CD4-positive, alpha-beta T cell (primary cell): ENCODE measurements at regions of chr1 and their contacts with region 1.

Region 1: DNA sequence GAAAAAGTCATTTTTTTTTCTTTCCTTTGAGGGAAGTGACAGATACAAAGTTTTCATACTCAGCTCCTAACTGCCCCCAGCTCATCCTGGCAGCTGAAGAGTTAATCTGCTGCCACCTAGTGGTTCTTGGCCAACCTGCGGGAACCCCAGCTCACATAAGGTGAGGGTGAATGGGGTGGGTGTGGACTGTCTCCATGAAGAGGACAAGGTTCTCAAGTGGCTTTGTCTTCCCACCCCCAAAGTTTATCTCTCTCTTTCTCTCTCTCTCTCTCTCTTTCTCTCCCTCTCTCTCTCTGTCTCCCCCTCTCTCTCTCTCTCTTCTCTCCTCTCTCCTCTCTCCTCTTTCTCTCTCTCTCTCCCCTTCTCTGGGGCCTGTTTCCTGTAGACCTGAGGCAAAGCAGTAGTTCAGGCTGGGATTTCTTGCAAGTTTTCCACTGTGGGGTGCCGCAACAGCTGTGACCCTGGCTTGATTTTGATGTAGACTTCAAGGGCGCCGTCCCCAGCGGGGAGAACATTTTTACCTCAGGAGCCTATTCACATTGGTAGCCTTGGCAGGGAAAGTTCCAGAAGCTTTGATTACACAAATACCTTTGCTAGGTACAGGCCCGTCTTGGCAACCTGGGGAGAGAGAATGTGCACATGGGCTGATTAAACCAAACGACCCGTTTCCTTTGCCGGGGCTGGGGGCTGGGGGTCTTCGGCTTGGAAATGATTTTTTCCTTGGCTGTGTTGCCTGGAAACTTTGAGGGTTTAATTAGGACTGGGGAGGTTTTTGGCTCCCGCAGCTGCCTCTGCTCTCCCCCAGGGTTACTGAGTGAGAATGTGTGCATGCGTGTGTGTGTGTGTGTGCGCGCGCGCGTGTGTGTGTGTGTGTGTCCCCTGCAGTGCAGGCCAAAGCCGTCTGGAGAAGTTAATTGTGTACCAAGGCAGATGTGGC is 135.9 kb downstream of the TM2D1 start:
- DNase-seq: peak; percentile 13 to 67 (median 35)
- ATAC-seq: peak; percentile 56
- H3K4me3 ChIP-seq: no peak overlapping the region
- H3K4me3 Mint-ChIP-seq: no peak overlapping the region
- H3K27ac ChIP-seq: no peak overlapping the region
- H3K27ac Mint-ChIP-seq: no peak overlapping the region
- H3K4me1 ChIP-seq: no peaks in the 10 kb centered on the region
- H3K4me1 Mint-ChIP-seq: no peaks in the 10 kb centered on the region
- H3K27me3 ChIP-seq: no peaks in the 10 kb centered on the region
- H3K27me3 Mint-ChIP-seq: no peaks in the 10 kb centered on the region
- CTCF ChIP-seq: peak; percentile 71

Region 2: GRCh38 chr1:59971464-59971911 is 1617.5 kb before region 1 on chr1:
- CTCF ChIA-PET with region 1: no interaction called
- POLR2A ChIA-PET with region 1: no interaction called
- intact Hi-C with region 1: loop called in 1 of 2 experiments (anchors 10 kb)
- DNase-seq: peak in 13 of 14 experiments; percentile 4 to 61 (median 30)
- ATAC-seq: no peak
- H3K4me3 ChIP-seq: no peak overlapping the region
- H3K4me3 Mint-ChIP-seq: no peak overlapping the region
- H3K27ac ChIP-seq: no peak overlapping the region
- H3K27ac Mint-ChIP-seq: no peak overlapping the region
- H3K4me1 ChIP-seq: peaks cover 5% of the 10 kb centered on the region
- H3K4me1 Mint-ChIP-seq: peaks cover 7% of the 10 kb centered on the region
- H3K27me3 ChIP-seq: peaks cover 7 to 14% of the 10 kb centered on the region in 2 experiments
- H3K27me3 Mint-ChIP-seq: peaks cover 30% of the 10 kb centered on the region
- CTCF ChIP-seq: peak; percentile 81

Region 3: DNA sequence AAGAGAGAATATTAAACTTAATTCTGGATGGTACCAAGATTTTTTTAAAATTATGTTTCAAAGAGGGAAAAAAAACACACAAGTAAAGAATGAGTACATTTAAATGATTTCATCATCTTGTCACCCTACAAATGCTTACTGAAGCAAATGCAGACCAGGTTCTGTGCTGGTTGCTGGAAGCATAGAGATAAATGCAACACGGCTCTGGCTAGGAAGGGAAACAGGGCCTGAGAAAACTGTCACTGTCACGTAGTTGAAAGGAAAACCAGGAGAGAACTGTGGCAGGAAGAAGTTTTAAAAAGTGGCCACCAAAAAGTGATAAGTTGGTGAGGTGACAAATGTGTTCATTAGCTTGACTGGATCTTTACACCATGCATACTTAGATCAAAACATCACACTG is 843.5 kb before region 1 on chr1:
- CTCF ChIA-PET with region 1: no interaction called
- POLR2A ChIA-PET with region 1: no interaction called
- intact Hi-C with region 1: no loop called
- DNase-seq: no peak
- ATAC-seq: no peak
- H3K4me3 ChIP-seq: no peak overlapping the region
- H3K4me3 Mint-ChIP-seq: no peak overlapping the region
- H3K27ac ChIP-seq: no peak overlapping the region
- H3K27ac Mint-ChIP-seq: no peak overlapping the region
- H3K4me1 ChIP-seq: no peaks in the 10 kb centered on the region
- H3K4me1 Mint-ChIP-seq: no peaks in the 10 kb centered on the region
- H3K27me3 ChIP-seq: no peaks in the 10 kb centered on the region
- H3K27me3 Mint-ChIP-seq: no peaks in the 10 kb centered on the region
- CTCF ChIP-seq: no peak

Region 4: DNA sequence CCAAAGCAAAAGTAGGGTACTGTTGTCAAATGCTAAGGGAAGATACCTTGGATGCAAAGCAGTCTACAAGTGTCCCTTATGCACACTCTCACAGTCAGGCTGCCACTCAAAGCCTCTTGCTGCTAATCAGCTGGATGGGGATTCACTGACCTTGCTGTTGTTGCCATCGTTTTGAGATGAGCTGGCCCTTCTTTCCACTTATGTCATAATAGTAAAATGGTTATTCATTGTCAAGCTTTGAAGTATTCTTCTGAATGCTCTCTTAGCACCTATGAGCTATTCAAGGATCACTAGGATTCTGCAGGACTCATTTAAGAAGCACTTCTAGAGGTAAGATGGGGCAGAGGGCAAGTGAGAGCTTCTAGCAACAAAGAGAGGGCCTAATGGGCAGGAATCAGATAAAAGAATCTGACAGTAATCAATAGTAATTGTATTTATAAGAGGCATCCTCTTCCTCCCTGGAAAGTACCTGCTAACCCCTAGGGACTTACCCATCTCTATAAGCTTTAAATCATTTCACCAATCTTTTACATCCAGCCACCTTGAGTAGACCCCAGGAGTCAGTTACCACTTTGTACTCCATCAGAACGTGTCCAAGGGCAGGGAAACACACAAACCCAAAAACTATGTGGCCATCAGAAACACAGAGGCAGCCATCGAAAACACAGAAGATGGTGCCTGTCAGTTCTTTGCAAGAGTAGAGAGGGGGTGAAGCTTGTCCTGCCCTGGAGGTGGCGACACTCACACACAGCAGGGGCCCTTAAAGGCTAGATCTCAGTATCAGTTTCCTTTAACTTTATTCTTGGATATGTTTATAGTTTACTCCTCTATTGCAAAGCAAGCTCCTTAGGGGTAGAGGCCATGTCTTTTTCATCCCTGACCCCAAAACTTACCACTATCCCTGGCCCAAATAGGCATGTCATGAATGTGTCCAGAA is 610.3 kb before region 1 on chr1:
- CTCF ChIA-PET with region 1: no interaction called
- POLR2A ChIA-PET with region 1: no interaction called
- intact Hi-C with region 1: loop called (anchors 2 to 10 kb)
- DNase-seq: peak in 12 of 14 experiments; percentile 1 to 58 (median 19)
- ATAC-seq: peak; percentile 61
- H3K4me3 ChIP-seq: no peak overlapping the region
- H3K4me3 Mint-ChIP-seq: no peak overlapping the region
- H3K27ac ChIP-seq: no peak overlapping the region
- H3K27ac Mint-ChIP-seq: no peak overlapping the region
- H3K4me1 ChIP-seq: no peaks in the 10 kb centered on the region
- H3K4me1 Mint-ChIP-seq: no peaks in the 10 kb centered on the region
- H3K27me3 ChIP-seq: no peaks in the 10 kb centered on the region
- H3K27me3 Mint-ChIP-seq: no peaks in the 10 kb centered on the region
- CTCF ChIP-seq: peak; percentile 15

Region 5: DNA sequence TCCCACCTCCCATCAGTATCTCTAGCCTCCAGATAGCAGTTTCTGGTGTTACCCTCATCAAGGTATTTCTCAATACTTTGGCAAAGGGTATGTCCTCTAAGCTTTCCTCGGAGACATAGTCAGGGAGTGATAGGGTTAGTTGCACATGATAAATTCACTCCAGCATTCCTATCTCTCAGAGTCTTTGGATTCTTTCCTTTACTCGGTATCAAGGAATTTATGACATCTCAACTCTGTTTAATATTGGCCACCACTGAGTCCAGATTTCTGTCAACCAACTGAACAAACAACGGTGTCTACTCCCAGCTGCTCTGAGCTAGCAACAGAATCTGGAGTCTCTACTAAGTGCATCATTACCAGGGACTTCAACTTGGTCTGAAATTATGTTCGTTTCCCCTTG is 97.5 kb before region 1 on chr1:
- CTCF ChIA-PET with region 1: no interaction called
- POLR2A ChIA-PET with region 1: no interaction called
- intact Hi-C with region 1: no loop called
- DNase-seq: no peak
- ATAC-seq: no peak
- H3K4me3 ChIP-seq: no peak overlapping the region
- H3K4me3 Mint-ChIP-seq: no peak overlapping the region
- H3K27ac ChIP-seq: no peak overlapping the region
- H3K27ac Mint-ChIP-seq: no peak overlapping the region
- H3K4me1 ChIP-seq: no peaks in the 10 kb centered on the region
- H3K4me1 Mint-ChIP-seq: no peaks in the 10 kb centered on the region
- H3K27me3 ChIP-seq: peaks cover 0 to 2% of the 10 kb centered on the region in 2 experiments
- H3K27me3 Mint-ChIP-seq: no peaks in the 10 kb centered on the region
- CTCF ChIP-seq: no peak

Region 6: GRCh38 chr1:61556631-61557030 is 32.4 kb before region 1 on chr1:
- CTCF ChIA-PET with region 1: no interaction called
- POLR2A ChIA-PET with region 1: no interaction called
- intact Hi-C with region 1: no loop called
- DNase-seq: no peak
- ATAC-seq: no peak
- H3K4me3 ChIP-seq: no peak overlapping the region
- H3K4me3 Mint-ChIP-seq: no peak overlapping the region
- H3K27ac ChIP-seq: no peak overlapping the region
- H3K27ac Mint-ChIP-seq: no peak overlapping the region
- H3K4me1 ChIP-seq: no peaks in the 10 kb centered on the region
- H3K4me1 Mint-ChIP-seq: no peaks in the 10 kb centered on the region
- H3K27me3 ChIP-seq: no peaks in the 10 kb centered on the region
- H3K27me3 Mint-ChIP-seq: peaks cover 9% of the 10 kb centered on the region
- CTCF ChIP-seq: no peak

Region 7: GRCh38 chr1:61904354-61904753 is 315.4 kb after region 1 on chr1:
- CTCF ChIA-PET with region 1: no interaction called
- POLR2A ChIA-PET with region 1: no interaction called
- intact Hi-C with region 1: no loop called
- DNase-seq: no peak
- ATAC-seq: no peak
- H3K4me3 ChIP-seq: no peak overlapping the region
- H3K4me3 Mint-ChIP-seq: no peak overlapping the region
- H3K27ac ChIP-seq: no peak overlapping the region
- H3K27ac Mint-ChIP-seq: no peak overlapping the region
- H3K4me1 ChIP-seq: no peaks in the 10 kb centered on the region
- H3K4me1 Mint-ChIP-seq: no peaks in the 10 kb centered on the region
- H3K27me3 ChIP-seq: no peaks in the 10 kb centered on the region
- H3K27me3 Mint-ChIP-seq: no peaks in the 10 kb centered on the region
- CTCF ChIP-seq: no peak